ENCODE measurements at regions of chr4 and their contacts with region 1.

Region 1: DNA sequence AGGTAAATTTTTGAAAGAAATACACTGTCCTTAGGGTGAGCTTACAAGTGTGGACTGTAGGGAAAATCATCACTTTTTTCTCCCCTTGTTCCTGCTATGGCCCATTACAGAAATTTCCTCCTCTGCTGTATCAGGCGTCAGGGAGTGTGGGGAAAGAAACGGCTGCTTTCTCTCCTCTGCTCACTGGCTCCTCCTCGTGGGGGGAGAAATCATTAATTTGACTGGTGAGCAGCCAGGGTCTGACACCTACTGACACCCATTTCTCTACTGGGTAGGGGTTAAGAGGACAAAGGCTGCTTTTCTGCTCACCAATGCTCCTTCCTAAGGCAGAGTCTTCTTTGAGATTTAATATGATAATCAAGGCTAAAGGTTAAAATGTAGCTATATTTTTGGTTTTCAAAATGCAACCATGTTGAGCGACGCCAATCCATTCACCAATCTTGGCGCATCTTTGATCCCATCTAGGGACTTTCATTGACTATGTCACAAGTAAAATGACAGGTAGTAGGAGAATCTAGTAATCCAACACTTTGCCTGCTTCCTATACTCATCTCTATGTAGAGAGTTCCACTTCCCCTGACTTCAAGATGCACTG is 25.1 kb downstream of the SETD7 start:
- DNase-seq: peak; percentile 67
- H3K4me3 Mint-ChIP-seq: no peak overlapping the region
- H3K27ac Mint-ChIP-seq: no peak overlapping the region
- H3K4me1 Mint-ChIP-seq: peaks cover 3% of the 10 kb centered on the region
- H3K27me3 Mint-ChIP-seq: no peaks in the 10 kb centered on the region

Region 2: GRCh38 chr4:139099366-139099982 is 431.5 kb before region 1 on chr4:
- CTCF ChIA-PET with region 1: no interaction called
- intact Hi-C with region 1: loop called (anchors 5 kb)
- DNase-seq: peak; percentile 89
- H3K4me3 Mint-ChIP-seq: no peak overlapping the region
- H3K27ac Mint-ChIP-seq: no peak overlapping the region
- H3K4me1 Mint-ChIP-seq: no peaks in the 10 kb centered on the region
- H3K27me3 Mint-ChIP-seq: no peaks in the 10 kb centered on the region

Region 3: GRCh38 chr4:139184129-139184528 is 346.8 kb before region 1 on chr4:
- CTCF ChIA-PET with region 1: no interaction called
- intact Hi-C with region 1: loop called (anchors 1 kb)
- DNase-seq: no peak
- H3K4me3 Mint-ChIP-seq: no peak overlapping the region
- H3K27ac Mint-ChIP-seq: no peak overlapping the region
- H3K4me1 Mint-ChIP-seq: peaks cover 3% of the 10 kb centered on the region
- H3K27me3 Mint-ChIP-seq: no peaks in the 10 kb centered on the region